ENCODE measurements at regions of chr6 and their contacts with region 1.

Region 1: GRCh38 chr6:51648236-51648635 is 439.2 kb downstream of the PKHD1 start:
- DNase-seq: no peak
- H3K4me3 Mint-ChIP-seq: no peak overlapping the region
- H3K27ac Mint-ChIP-seq: no peak overlapping the region
- H3K4me1 Mint-ChIP-seq: no peaks in the 10 kb centered on the region
- H3K27me3 Mint-ChIP-seq: no peaks in the 10 kb centered on the region

Region 2: DNA sequence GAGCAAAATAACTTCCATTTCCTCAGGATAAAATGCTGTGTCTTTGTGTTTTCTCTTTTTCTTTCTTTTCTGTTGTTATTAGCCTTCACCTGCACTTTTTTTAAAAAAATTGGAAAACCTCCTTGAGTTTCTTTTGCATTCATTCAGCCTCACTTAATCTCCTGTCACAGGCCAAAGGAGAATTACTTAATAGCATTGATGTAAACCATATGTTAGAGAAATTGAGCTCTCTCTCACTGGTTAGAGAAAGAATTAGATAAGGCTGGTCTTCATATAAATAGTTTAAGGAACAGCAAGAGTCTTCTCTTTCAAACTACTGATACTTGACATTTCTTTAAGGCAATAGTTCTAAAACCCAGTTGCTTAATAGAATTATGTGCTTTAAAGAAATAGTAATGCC is 265.4 kb before region 1 on chr6:
- intact Hi-C with region 1: no loop called
- DNase-seq: no peak
- H3K4me3 Mint-ChIP-seq: no peak overlapping the region
- H3K27ac Mint-ChIP-seq: no peak overlapping the region
- H3K4me1 Mint-ChIP-seq: no peaks in the 10 kb centered on the region
- H3K27me3 Mint-ChIP-seq: no peaks in the 10 kb centered on the region

Region 3: GRCh38 chr6:51613554-51613953 is 34.7 kb before region 1 on chr6:
- intact Hi-C with region 1: no loop called
- DNase-seq: no peak
- H3K4me3 Mint-ChIP-seq: no peak overlapping the region
- H3K27ac Mint-ChIP-seq: no peak overlapping the region
- H3K4me1 Mint-ChIP-seq: no peaks in the 10 kb centered on the region
- H3K27me3 Mint-ChIP-seq: no peaks in the 10 kb centered on the region

Region 4: DNA sequence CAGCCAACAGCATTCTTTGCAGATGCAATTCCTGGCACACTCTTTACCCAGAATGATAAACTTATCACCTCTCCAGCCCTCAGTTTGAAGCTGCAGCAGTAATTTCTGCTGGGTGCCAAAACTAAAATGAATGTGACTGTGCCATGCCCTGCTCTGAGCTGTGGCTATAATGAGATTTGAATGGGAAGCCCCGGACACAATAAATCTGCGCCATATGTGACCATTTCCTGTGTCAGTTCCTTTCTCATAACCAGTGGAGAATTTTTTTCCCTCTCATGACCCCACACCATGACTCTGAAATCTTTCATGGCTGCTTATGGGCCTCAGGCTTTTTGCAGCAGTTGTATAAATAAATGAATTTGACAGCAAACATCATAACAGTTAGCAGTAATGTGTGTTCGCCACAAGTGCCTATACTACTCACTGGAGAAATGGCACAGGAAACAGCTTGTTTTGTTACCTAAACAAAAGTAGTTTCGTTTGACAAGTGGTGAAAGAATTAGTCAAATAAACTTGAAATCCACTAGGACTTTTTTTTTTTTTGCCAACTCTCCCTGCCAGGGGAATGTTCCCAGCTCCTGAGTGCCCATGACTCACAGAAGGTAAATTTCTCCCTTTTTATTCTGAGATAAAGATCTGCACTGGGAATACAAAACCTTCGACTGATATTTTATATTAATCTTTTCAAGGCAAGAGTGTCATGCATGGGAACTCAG is 30.8 kb after region 1 on chr6:
- intact Hi-C with region 1: loop called (anchors 1 kb)
- DNase-seq: no peak
- H3K4me3 Mint-ChIP-seq: no peak overlapping the region
- H3K27ac Mint-ChIP-seq: no peak overlapping the region
- H3K4me1 Mint-ChIP-seq: no peaks in the 10 kb centered on the region
- H3K27me3 Mint-ChIP-seq: peaks cover 2% of the 10 kb centered on the region